Activated B cell treated with CpG ODN at 0.5 μM for 24 hours (primary cell): ENCODE measurements at regions of chr2 and their contacts with region 1.

Region 1: GRCh38 chr2:12044857-12045256 is 298.4 kb downstream of the LPIN1 start:
- DNase-seq: no peak
- ATAC-seq: peak; percentile 89
- H3K4me3 Mint-ChIP-seq: peak overlapping the region; percentile 44
- H3K27ac Mint-ChIP-seq: peak overlapping the region; percentile 68
- H3K4me1 Mint-ChIP-seq: peaks cover 97% of the 10 kb centered on the region
- H3K27me3 Mint-ChIP-seq: no peaks in the 10 kb centered on the region
- CTCF ChIP-seq: no peak

Region 2: GRCh38 chr2:11967946-11968465 is 76.9 kb before region 1 on chr2:
- CTCF ChIA-PET with region 1: no interaction called
- POLR2A ChIA-PET with region 1: no interaction called
- intact Hi-C with region 1: no loop called
- DNase-seq: no peak
- ATAC-seq: no peak
- H3K4me3 Mint-ChIP-seq: no peak overlapping the region
- H3K27ac Mint-ChIP-seq: no peak overlapping the region
- H3K4me1 Mint-ChIP-seq: peaks cover 14% of the 10 kb centered on the region
- H3K27me3 Mint-ChIP-seq: no peaks in the 10 kb centered on the region
- CTCF ChIP-seq: no peak

Region 3: GRCh38 chr2:12005886-12006681 is 38.8 kb before region 1 on chr2:
- CTCF ChIA-PET with region 1: interaction called, 3 read pairs
- POLR2A ChIA-PET with region 1: no interaction called
- intact Hi-C with region 1: loop called (anchors 5 kb)
- DNase-seq: no peak
- ATAC-seq: peak; percentile 77
- H3K4me3 Mint-ChIP-seq: peak overlapping the region; percentile 46
- H3K27ac Mint-ChIP-seq: peak overlapping the region; percentile 56
- H3K4me1 Mint-ChIP-seq: peaks cover 57% of the 10 kb centered on the region
- H3K27me3 Mint-ChIP-seq: no peaks in the 10 kb centered on the region
- CTCF ChIP-seq: no peak

Region 4: DNA sequence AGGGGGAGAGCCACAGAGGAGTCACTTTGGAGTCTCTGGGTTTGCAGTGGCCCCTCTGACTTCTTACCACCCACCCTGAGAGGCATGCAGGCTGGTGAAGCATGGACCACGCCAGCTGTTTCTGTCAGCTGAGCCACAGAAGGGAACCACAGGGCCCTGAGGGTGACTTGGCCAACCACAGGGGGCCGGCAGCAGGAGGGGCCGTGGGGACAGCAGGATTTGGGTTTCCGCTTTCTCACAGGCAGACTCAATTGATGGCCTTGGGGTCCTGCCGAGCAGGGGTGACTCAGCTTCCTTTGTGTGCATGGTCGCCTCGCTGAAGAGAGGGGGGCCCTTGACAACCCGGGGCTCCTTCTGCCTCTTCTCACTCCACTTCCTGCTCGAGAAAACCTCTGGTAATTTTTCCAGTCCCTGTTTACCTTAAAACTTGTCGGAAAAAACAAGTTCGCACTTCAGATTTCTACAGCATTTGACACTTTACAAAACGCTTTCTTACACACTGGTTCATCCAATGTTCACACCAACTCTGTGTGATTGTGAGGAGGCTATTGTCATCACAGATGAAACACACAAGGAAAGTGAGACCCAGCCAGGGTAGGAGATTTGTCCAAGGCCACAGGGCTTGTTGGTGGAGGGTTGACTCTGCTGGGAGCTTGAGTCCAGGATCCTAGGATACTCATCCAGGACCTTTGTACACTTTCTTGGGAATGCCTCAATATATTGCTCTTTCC is 12.7 kb after region 1 on chr2:
- CTCF ChIA-PET with region 1: no interaction called
- POLR2A ChIA-PET with region 1: interaction called, 3 read pairs
- intact Hi-C with region 1: loop called (anchors 1 kb)
- DNase-seq: peak; percentile 57
- ATAC-seq: peak; percentile 88
- H3K4me3 Mint-ChIP-seq: peak overlapping the region; percentile 47
- H3K27ac Mint-ChIP-seq: peak overlapping the region; percentile 50
- H3K4me1 Mint-ChIP-seq: peaks cover 67% of the 10 kb centered on the region
- H3K27me3 Mint-ChIP-seq: no peaks in the 10 kb centered on the region
- CTCF ChIP-seq: no peak

Region 5: DNA sequence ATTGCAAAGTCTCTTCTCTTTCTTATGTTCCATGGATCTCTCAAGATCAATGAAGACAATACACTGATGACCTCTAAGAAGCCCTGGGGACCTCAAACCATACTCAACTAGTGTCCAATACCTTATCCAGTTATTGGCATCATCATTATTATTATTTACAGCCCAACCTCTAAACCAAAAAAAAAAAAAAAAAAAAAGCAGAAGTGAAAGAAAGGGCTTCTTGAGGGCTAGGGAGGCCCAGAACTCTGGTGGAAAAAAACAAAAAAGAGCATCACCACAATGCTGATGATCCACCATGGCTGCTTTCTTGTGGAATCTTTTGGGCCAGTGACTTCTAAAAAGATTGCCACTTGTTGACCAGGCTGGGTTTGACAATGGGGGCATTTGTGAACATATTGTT is 26.5 kb after region 1 on chr2:
- CTCF ChIA-PET with region 1: no interaction called
- POLR2A ChIA-PET with region 1: no interaction called
- intact Hi-C with region 1: loop called (anchors 2 kb)
- DNase-seq: no peak
- ATAC-seq: peak; percentile 83
- H3K4me3 Mint-ChIP-seq: peak overlapping the region; percentile 11
- H3K27ac Mint-ChIP-seq: peak overlapping the region; percentile 61
- H3K4me1 Mint-ChIP-seq: peaks cover 63% of the 10 kb centered on the region
- H3K27me3 Mint-ChIP-seq: no peaks in the 10 kb centered on the region
- CTCF ChIP-seq: no peak

Region 6: GRCh38 chr2:12320991-12321641 is 276.3 kb after region 1 on chr2:
- CTCF ChIA-PET with region 1: interaction called, 5 read pairs
- POLR2A ChIA-PET with region 1: no interaction called
- intact Hi-C with region 1: loop called (anchors 10 kb)
- DNase-seq: no peak
- ATAC-seq: no peak
- H3K4me3 Mint-ChIP-seq: no peak overlapping the region
- H3K27ac Mint-ChIP-seq: no peak overlapping the region
- H3K4me1 Mint-ChIP-seq: peaks cover 37% of the 10 kb centered on the region
- H3K27me3 Mint-ChIP-seq: no peaks in the 10 kb centered on the region
- CTCF ChIP-seq: no peak

Region 7: DNA sequence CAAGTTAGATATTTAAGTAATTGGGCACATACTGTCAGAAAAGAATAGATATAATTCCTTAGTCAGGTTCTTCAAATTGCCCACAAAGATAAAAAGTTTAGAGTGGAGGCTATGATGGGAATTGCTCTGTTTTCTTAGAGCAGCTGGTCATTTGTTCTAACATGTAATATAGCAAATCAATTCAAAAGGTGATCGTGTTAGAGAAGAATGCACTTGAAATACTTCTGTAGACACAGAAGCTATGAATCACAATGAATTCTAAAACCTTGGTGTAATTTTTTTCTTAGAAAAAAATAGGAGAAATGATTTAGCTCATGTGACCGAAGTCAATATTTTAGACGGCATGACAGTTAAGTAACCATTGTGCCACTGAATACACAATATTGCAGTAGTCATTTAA is 1669.6 kb after region 1 on chr2:
- CTCF ChIA-PET with region 1: no interaction called
- POLR2A ChIA-PET with region 1: no interaction called
- intact Hi-C with region 1: no loop called
- DNase-seq: no peak
- ATAC-seq: no peak
- H3K4me3 Mint-ChIP-seq: no peak overlapping the region
- H3K27ac Mint-ChIP-seq: no peak overlapping the region
- H3K4me1 Mint-ChIP-seq: no peaks in the 10 kb centered on the region
- H3K27me3 Mint-ChIP-seq: no peaks in the 10 kb centered on the region
- CTCF ChIP-seq: no peak